Activated CD4-positive, alpha-beta memory T cell treated with anti-CD3 and anti-CD28 coated beads for 36 hours (primary cell): ENCODE measurements at regions of chr17 and their contacts with region 1.

Region 1: GRCh38 chr17:39730095-39730921 is at the start of gene MIEN1:
- DNase-seq: peak; percentile 95
- H3K4me3 Mint-ChIP-seq: peak within 1 kb of the TSS; percentile 88
- H3K27ac Mint-ChIP-seq: peak within 1 kb of the TSS; percentile 73
- H3K4me1 Mint-ChIP-seq: peaks cover 12% of the 10 kb centered on the region
- H3K27me3 Mint-ChIP-seq: no peaks in the 10 kb centered on the region
- total RNA-seq, gene MIEN1: 41.0 to 43.8 TPM

Region 2: DNA sequence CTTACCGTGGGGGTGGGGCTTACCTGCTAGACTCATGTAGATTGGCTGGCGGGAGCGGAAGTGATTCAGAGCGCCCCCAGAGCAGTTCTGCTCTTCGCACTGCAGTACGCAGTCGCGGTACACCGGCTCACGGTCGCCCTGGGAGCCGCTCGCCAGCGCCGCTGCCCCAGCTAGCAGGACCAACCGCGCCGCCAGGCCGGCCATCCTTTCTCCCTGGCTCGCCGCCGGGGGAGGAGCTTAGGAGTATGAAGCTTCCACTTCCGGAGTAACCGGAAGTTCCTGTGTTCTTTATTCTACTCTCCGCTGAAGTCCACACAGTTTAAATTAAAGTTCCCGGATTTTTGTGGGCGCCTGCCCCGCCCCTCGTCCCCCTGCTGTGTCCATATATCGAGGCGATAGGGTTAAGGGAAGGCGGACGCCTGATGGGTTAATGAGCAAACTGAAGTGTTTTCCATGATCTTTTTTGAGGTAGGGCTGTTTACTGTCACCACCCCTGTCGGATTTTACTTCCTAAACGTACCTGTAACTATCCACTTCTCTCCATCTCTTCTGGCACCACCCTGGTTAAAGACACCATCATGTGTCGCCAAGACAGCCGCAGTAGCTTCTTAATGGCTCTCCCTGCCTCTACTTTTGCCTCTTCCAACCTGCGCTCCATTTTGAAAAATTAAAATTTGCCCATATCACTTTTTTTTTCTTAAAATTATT is 42.3 kb before region 1 on chr17 and contains the start of gene PGAP3:
- CTCF ChIA-PET with region 1: interaction called, 12 read pairs
- POLR2A ChIA-PET with region 1: interaction called, 7 read pairs
- intact Hi-C with region 1: loop called (anchors 5 kb)
- DNase-seq: peak; percentile 91
- H3K4me3 Mint-ChIP-seq: peak within 1 kb of the TSS; percentile 92
- H3K27ac Mint-ChIP-seq: peak within 1 kb of the TSS; percentile 84
- H3K4me1 Mint-ChIP-seq: peaks cover 18% of the 10 kb centered on the region
- H3K27me3 Mint-ChIP-seq: no peaks in the 10 kb centered on the region
- total RNA-seq, gene PGAP3: 8.3 to 8.6 TPM

Region 3: GRCh38 chr17:39808409-39808997 is 78.2 kb after region 1 on chr17:
- CTCF ChIA-PET with region 1: no interaction called
- POLR2A ChIA-PET with region 1: no interaction called
- intact Hi-C with region 1: no loop called
- DNase-seq: no peak
- H3K4me3 Mint-ChIP-seq: no peak overlapping the region
- H3K27ac Mint-ChIP-seq: no peak overlapping the region
- H3K4me1 Mint-ChIP-seq: peaks cover 65% of the 10 kb centered on the region
- H3K27me3 Mint-ChIP-seq: no peaks in the 10 kb centered on the region

Region 4: DNA sequence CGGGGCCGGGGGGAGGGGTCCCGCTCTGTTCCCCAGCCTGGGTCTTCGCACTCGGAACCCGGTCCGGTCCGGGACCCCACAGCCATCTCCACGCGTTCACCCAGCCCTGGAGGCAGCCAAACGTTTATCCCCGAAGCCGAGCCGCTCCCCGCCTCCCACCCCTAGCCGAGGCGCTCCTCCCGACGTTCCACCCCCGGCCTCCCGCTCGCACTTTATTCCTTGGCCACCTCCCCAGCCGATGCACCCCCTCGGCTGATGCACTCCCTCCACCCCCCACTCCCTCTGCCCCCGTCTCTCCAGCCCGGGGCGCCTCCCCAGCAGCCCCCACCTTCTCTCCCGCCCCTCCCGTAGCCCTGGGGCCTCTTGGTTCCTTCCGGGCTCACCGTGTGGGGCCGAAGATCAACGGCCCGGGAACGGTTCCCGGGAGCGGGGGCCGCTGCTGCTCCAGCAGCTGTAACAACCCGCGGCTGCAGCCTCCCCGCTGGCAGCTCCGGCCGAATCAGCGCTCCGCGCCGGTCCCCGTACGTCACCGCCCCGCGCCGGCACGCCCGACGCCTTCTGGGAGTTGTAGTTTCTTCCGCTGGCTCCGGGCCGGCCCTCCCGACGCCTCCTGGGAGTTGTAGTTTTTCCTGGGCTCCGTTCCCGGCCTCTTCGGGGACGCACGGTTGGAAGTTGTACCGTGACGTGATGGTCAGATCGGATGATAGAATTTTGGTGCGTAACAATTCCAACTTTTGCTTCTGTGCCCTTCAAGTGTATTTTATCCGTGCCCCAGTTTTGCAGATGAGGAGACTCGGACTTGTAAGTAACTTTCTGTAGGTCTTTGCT is 197.0 kb after region 1 on chr17 and contains the starts of genes LRRC3C and ORMDL3:
- CTCF ChIA-PET with region 1: no interaction called
- POLR2A ChIA-PET with region 1: no interaction called
- intact Hi-C with region 1: no loop called
- DNase-seq: peak; percentile 95
- H3K4me3 Mint-ChIP-seq: peak within 1 kb of the TSS; percentile 85
- H3K27ac Mint-ChIP-seq: peak within 1 kb of the TSS; percentile 90
- H3K4me1 Mint-ChIP-seq: peaks cover 52% of the 10 kb centered on the region
- H3K27me3 Mint-ChIP-seq: no peaks in the 10 kb centered on the region
- total RNA-seq, gene LRRC3C: not detected
- total RNA-seq, gene ORMDL3: 53.7 to 58.3 TPM